ENCODE measurements at regions of chr6 and their contacts with region 1.

Region 1: DNA sequence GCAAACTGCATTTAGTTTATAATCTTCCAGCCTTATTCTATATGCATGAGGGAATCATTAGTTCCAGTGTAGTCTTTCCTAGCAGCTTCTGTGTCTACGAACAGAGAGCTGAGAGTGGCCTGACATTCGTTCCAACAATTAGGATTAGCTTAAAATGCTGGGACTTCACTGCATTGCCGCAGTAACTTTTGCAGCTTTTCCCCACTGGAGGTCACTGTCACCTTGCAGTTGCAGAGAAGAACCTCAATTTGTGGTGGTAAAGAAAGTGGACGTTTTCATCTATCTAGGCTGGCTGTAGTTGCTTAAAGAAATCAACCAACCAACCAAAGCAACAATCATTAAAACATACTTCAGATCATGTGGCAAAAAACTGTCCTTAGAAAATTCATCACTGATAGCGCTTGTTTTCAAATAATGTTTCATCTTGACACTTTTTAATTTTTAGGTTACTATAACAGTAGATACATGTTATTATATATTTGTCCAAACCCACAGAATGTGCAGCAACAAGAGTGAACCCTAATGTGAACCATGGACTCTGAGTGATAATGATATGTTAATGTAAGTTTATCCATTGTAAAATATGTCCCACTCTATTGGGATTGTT is 12.2 kb downstream of the MYLK4 start:
- DNase-seq: peak; percentile 84 to 91 (median 88)
- H3K4me3 ChIP-seq: no peak overlapping the region
- H3K27ac ChIP-seq: no peak overlapping the region
- H3K4me1 ChIP-seq: peaks cover 9 to 38% (median 25%) of the 10 kb centered on the region in 4 experiments
- H3K27me3 ChIP-seq: no peaks in the 10 kb centered on the region

Region 2: DNA sequence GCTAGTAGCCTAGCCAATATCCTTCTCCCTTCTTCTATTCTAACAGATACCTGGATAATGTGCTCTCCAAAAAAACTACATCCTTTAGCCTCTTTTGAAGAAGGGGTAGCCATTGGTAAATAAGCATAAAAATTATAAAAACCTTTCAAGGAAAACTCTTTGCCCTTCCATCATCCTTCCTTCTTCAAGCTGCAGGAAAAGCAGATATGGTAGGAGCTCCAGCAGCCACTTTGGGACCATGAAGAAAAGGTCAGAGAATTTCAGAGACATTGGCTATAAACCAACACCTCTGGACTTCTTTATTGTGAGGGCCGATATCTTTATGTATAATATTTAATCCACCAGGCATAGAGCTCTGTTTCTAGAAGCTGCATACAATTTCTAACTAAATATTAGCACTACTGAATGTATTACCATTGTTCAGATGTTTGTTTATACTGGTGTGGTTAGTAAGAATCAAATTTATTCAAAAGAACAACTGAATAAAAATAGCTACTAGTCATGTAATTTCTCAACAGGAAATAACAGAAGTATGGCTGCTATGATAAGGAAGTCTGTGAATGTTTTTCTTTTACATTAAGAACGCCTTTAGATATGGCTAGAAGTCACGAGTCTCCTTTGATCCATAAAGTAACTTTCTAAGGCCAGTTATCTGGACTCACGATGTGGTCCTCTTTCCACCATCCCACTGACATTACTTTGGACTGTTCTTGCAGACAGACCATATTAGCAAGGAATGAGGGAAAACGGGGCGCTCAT is 20.0 kb before region 1 on chr6:
- CTCF ChIA-PET with region 1: interaction called, 67 read pairs
- POLR2A ChIA-PET with region 1: interaction called, 3 read pairs
- DNase-seq: peak; percentile 78 to 94 (median 86)
- H3K4me3 ChIP-seq: peak overlapping the region in 4 of 7 experiments; percentile 11 to 56 (median 48)
- H3K27ac ChIP-seq: peak overlapping the region; percentile 75 to 86
- H3K4me1 ChIP-seq: peaks cover 7 to 38% (median 16%) of the 10 kb centered on the region in 4 experiments
- H3K27me3 ChIP-seq: no peaks in the 10 kb centered on the region

Region 3: GRCh38 chr6:2749969-2750600 is 11.6 kb after region 1 on chr6:
- CTCF ChIA-PET with region 1: interaction called, 174 read pairs
- POLR2A ChIA-PET with region 1: interaction called, 3 read pairs
- DNase-seq: peak; percentile 74 to 87 (median 84)
- H3K4me3 ChIP-seq: peak overlapping the region in 1 of 7 experiments; percentile 51
- H3K27ac ChIP-seq: no peak overlapping the region
- H3K4me1 ChIP-seq: peaks cover 23 to 57% (median 35%) of the 10 kb centered on the region in 4 experiments
- H3K27me3 ChIP-seq: no peaks in the 10 kb centered on the region

Region 4: DNA sequence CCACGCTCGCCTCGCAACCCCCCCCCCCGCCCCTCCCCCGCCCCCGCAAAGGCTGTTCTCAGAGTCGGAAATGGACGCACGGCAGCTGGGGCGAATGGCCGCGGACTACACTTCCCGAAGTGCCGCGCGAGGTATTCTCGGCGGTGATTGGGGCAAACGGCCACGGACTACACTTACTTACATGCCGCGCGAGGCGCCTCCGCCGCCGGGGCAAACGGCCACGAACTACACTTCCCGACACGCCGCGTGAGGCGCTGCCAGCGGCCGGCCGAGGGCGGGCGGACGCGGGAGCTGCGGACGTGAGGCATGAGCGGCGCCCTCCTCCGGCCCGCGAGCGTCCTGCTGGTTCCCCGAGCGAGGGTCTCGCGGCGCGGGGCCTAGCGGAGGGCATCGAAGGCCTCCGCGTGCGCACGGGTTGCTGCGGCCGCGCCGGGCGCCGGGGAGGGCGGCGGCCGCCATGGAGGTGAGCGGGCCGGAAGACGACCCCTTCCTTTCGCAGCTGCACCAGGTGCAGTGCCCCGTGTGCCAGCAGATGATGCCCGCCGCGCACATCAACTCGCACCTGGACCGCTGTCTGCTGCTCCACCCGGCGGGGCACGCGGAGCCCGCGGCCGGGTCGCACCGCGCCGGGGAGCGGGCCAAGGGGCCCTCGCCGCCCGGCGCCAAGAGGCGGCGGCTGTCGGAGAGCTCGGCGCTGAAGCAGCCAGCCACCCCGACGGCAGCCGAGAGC is 26.9 kb after region 1 on chr6 and contains the start of gene WRNIP1:
- CTCF ChIA-PET with region 1: interaction called, 227 read pairs
- POLR2A ChIA-PET with region 1: no interaction called
- DNase-seq: peak; percentile 99 to 100 (median 99)
- H3K4me3 ChIP-seq: peak within 1 kb of the TSS; percentile 81 to 98 (median 95)
- H3K27ac ChIP-seq: peak within 1 kb of the TSS; percentile 92 to 96
- H3K4me1 ChIP-seq: peaks cover 24 to 52% (median 41%) of the 10 kb centered on the region in 4 experiments
- H3K27me3 ChIP-seq: no peaks in the 10 kb centered on the region

Region 5: DNA sequence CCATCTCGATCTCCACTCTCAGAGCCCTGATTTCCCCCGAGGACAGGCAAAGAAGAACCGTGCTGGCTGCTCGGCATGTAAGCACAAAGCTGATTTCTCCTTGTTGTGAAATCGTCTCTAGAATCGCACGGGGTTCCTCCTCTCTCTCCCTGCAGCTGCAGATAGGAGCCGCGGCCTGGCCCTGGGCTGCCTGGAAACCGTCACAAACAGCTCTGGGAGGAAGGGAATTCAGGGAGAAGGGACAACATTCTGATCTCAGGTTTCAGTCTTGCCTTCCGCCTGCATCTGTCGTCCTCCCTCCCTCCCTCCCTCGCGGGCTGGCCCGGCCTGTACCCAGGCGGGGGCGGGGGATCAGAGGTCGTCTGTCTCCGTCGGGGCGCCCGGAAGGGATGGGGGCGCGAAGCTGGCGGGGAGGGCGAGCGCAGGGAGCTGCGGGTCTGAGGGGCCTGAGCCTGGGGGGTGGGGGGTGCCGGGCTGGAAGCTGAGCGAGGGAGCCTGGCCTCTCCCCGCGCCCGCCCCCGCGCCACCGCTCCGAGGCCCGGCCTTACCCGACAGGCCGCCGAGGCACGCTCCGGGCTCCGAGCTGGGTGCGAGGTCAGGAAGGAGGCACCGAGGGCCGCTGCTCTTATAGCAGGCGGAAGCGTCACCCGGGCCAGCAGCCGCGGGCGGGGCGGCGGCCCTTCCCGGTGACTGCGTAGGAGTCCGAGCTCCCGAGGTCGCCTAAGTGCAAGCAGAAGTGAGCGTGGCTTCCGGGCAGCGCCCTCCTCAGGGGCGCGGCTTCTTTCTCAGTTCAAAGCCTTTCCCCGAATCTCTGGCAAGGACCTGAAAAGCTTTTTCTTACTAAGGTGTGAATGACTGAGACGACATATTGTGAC is 103.0 kb after region 1 on chr6 and contains the start of gene SERPINB1:
- CTCF ChIA-PET with region 1: interaction called, 24 read pairs
- POLR2A ChIA-PET with region 1: interaction called, 5 read pairs
- DNase-seq: peak; percentile 86 to 94 (median 91)
- H3K4me3 ChIP-seq: peak within 1 kb of the TSS; percentile 59 to 97 (median 93)
- H3K27ac ChIP-seq: peak within 1 kb of the TSS; percentile 75 to 91
- H3K4me1 ChIP-seq: peaks cover 39 to 61% (median 56%) of the 10 kb centered on the region in 4 experiments
- H3K27me3 ChIP-seq: no peaks in the 10 kb centered on the region

Region 6: DNA sequence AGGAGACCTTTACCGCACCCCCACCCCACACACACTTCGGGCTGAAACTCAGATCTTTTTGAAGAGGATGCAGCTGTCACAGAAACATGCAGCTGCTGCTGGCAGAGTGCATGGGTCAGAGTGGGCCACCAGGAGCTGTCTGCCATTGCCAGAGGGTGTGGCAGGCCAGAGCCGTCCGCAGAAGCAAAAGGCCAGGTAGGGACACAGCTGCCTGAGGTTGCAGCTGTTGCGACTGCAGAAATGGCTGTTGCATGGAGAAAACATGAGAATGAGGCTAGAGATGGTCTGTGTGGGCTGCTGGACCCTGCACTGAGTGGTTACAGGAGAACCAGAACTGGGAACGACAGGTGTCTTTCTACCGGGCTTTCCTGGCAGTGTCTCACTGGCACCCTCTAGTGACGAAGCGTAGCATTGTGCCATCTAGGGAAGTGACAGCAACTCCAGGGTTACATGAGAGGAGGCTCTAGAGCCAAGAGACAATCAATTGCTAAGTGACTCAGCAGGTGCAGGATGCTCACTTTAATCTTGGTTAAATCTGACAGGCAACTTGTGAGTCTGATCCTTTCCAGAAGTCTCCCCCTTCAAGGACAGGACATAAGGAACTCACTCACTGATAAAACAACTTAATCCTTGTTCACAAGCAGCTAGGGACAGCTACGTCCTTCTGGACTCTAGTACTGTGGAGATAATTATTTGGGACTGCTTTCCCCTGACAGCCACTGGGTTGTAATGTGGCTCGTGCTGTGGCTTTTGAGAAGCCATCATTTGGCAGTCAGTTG is 193.7 kb after region 1 on chr6:
- CTCF ChIA-PET with region 1: interaction called, 13 read pairs
- POLR2A ChIA-PET with region 1: no interaction called
- DNase-seq: peak; percentile 84 to 91 (median 90)
- H3K4me3 ChIP-seq: peak overlapping the region in 4 of 7 experiments; percentile 21 to 67 (median 52)
- H3K27ac ChIP-seq: no peak overlapping the region
- H3K4me1 ChIP-seq: peaks cover 0 to 21% (median 10%) of the 10 kb centered on the region in 4 experiments
- H3K27me3 ChIP-seq: no peaks in the 10 kb centered on the region